Caco-2 (cell line): ENCODE measurements at regions of chr5 and their contacts with region 1.

Region 1: DNA sequence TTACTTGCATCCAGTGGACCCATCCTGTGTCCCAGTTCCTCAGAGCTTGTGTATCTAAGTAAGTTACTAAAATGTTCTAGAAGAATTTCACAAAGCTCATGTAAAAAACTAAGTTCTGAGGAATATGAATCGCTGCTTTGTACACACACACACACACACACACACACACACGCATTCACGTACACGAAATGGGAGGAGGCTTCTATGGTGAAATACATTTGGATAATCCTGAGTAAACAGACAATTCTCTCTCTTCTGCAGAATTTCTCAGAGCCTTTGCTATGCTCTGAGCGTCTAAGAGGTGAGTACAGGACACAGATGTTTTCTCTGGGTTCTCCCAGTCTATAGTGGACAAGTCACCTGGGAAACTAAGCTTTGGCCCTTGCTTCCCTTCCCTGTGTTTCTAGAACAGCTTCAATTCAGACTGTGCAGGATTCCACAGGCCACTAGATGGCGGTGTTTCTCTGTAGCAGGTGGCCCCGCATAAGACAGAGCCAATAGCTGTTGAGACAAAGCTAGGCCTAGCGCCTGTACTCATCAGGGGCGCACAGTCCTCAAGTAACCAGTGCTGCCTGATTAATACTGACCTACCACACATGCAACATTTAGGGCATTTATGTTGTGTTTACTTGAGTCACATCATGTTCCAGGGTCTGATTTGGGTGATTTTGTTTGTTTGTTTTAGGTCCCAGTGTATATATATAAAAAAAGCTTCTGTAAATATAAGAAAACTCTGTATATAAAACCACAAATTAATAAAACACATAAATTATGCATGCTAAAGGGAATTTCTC is 114.8 kb downstream of the LIFR start:
- DNase-seq: peak; percentile 89 to 90
- H3K4me3 ChIP-seq: no peak overlapping the region
- H3K4me3 Mint-ChIP-seq: no peak overlapping the region
- H3K27ac Mint-ChIP-seq: no peak overlapping the region
- H3K4me1 ChIP-seq: no peaks in the 10 kb centered on the region
- H3K4me1 Mint-ChIP-seq: no peaks in the 10 kb centered on the region
- H3K27me3 ChIP-seq: no peaks in the 10 kb centered on the region
- H3K27me3 Mint-ChIP-seq: no peaks in the 10 kb centered on the region
- CTCF ChIP-seq: peak; percentile 93 to 97

Region 2: GRCh38 chr5:38382898-38383297 is 58.8 kb before region 1 on chr5:
- CTCF ChIA-PET with region 1: interaction called, 22 read pairs
- POLR2A ChIA-PET with region 1: no interaction called
- intact Hi-C with region 1: no loop called
- DNase-seq: peak; percentile 81 to 83
- H3K4me3 ChIP-seq: no peak overlapping the region
- H3K4me3 Mint-ChIP-seq: no peak overlapping the region
- H3K27ac Mint-ChIP-seq: no peak overlapping the region
- H3K4me1 ChIP-seq: no peaks in the 10 kb centered on the region
- H3K4me1 Mint-ChIP-seq: peaks cover 8% of the 10 kb centered on the region
- H3K27me3 ChIP-seq: no peaks in the 10 kb centered on the region
- H3K27me3 Mint-ChIP-seq: peaks cover 5% of the 10 kb centered on the region
- CTCF ChIP-seq: peak; percentile 70 to 84

Region 3: DNA sequence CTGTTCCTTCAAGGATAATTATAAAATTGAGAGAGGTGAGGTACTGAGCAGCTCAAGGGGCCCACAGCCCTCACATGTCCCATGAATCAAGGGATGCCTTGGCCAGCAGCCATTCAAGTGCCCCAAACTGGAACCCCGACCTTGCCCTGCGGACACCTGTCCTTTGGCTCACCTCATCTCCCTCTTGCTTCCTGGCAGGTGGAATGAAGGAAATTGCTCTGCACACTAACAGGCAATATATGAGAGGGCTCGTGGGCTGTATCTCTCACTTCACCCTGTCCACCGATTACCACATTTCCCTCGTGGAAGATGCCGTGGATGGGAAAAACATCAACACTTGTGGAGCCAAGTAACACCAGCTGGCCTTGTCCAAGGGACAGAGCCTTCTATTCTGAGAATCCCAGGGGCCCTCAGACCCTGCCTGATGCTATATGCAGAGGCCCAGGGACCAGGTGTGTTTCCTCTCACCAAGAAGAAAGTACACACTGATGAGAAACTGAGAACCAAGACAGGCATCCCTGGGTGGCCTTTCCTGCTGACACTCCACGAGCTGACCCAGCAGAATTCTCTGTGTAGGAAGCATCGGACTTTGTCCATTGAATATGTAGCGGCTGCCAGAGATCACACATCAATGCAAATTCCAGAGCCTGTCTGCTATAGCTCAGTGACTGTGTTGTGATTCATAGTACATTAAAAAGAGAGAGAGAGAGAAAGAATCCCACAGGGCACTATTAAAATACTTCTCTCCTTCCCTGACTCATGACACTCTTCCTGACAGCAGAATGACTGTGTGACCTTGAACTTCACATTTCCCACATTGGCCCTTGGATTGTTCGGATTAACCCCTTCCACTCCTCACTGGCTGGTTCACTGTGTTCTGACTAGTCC is 22.2 kb after region 1 on chr5:
- CTCF ChIA-PET with region 1: interaction called, 11 read pairs
- POLR2A ChIA-PET with region 1: interaction called, 3 read pairs
- intact Hi-C with region 1: no loop called
- DNase-seq: peak; percentile 43 to 53
- H3K4me3 ChIP-seq: no peak overlapping the region
- H3K4me3 Mint-ChIP-seq: no peak overlapping the region
- H3K27ac Mint-ChIP-seq: no peak overlapping the region
- H3K4me1 ChIP-seq: peaks cover 8% of the 10 kb centered on the region; the same call in 1 of the 2 replicates
- H3K4me1 Mint-ChIP-seq: no peaks in the 10 kb centered on the region
- H3K27me3 ChIP-seq: no peaks in the 10 kb centered on the region
- H3K27me3 Mint-ChIP-seq: no peaks in the 10 kb centered on the region
- CTCF ChIP-seq: no peak

Region 4: GRCh38 chr5:38515646-38516045 is 74.0 kb after region 1 on chr5:
- CTCF ChIA-PET with region 1: interaction called, 33 read pairs
- POLR2A ChIA-PET with region 1: no interaction called
- intact Hi-C with region 1: no loop called
- DNase-seq: peak in 1 of 2 experiments; percentile 17
- H3K4me3 ChIP-seq: no peak overlapping the region
- H3K4me3 Mint-ChIP-seq: no peak overlapping the region
- H3K27ac Mint-ChIP-seq: no peak overlapping the region
- H3K4me1 ChIP-seq: no peaks in the 10 kb centered on the region
- H3K4me1 Mint-ChIP-seq: no peaks in the 10 kb centered on the region
- H3K27me3 ChIP-seq: no peaks in the 10 kb centered on the region
- H3K27me3 Mint-ChIP-seq: no peaks in the 10 kb centered on the region
- CTCF ChIP-seq: peak; percentile 29 to 67

Region 5: GRCh38 chr5:38666668-38667498 is 225.2 kb after region 1 on chr5:
- CTCF ChIA-PET with region 1: interaction called, 12 read pairs
- POLR2A ChIA-PET with region 1: no interaction called
- intact Hi-C with region 1: loop called (anchors 1 kb)
- DNase-seq: peak; percentile 52 to 56
- H3K4me3 ChIP-seq: no peak overlapping the region
- H3K4me3 Mint-ChIP-seq: no peak overlapping the region
- H3K27ac Mint-ChIP-seq: peak overlapping the region; percentile 13
- H3K4me1 ChIP-seq: peaks cover 58% of the 10 kb centered on the region
- H3K4me1 Mint-ChIP-seq: peaks cover 45% of the 10 kb centered on the region
- H3K27me3 ChIP-seq: no peaks in the 10 kb centered on the region
- H3K27me3 Mint-ChIP-seq: no peaks in the 10 kb centered on the region
- CTCF ChIP-seq: peak; percentile 60 to 73

Region 6: GRCh38 chr5:38751103-38751502 is 309.5 kb after region 1 on chr5:
- CTCF ChIA-PET with region 1: interaction called, 16 read pairs
- POLR2A ChIA-PET with region 1: no interaction called
- intact Hi-C with region 1: no loop called
- DNase-seq: no peak
- H3K4me3 ChIP-seq: no peak overlapping the region
- H3K4me3 Mint-ChIP-seq: no peak overlapping the region
- H3K27ac Mint-ChIP-seq: no peak overlapping the region
- H3K4me1 ChIP-seq: no peaks in the 10 kb centered on the region
- H3K4me1 Mint-ChIP-seq: peaks cover 9% of the 10 kb centered on the region
- H3K27me3 ChIP-seq: no peaks in the 10 kb centered on the region
- H3K27me3 Mint-ChIP-seq: no peaks in the 10 kb centered on the region
- CTCF ChIP-seq: no peak

Region 7: DNA sequence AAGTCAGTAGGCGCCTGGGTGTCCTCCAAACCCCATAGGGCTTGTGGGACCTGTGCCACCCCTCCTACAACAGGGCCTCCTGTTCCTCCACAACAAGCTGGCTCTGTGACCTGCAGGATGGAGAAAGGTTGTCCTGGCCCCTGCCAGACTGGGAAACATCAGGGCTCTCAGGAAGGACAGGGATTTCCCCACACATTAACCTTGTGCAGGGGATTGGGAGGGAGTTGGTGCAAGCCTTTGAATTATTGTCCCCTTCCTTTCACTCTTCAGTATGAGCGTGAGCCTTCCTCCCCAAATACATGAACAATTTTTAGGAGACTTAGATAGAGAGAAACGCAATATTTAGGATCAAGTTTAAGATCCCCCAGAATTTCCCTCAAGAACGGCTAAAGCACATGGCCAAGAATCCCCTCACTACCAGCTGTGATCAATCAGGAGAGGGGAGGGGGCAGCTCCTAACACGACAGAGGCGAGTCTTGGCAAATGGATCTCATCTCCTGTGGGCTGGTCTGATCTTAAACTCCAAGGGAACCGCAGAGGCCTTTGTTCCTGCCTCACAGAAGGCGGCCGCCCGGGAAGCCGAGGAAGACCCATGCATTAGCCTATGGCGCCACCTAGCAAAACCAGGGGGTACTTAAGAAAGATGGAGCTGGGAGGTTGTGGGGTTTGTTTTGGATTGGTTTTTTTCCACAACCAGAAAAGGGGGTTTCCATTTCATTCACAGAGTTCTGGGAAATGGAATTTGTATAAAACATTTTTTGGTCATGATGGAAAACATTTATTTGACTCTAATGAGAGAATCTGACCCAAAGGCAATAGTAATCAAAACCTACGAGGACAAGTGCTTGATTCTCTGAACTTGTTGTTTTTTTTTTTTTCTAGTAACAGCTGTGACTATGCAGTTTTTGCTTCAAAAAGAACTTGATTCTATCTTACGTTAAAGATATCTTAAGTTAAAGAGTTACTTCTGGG is 368.0 kb after region 1 on chr5:
- CTCF ChIA-PET with region 1: interaction called, 189 read pairs
- POLR2A ChIA-PET with region 1: interaction called, 3 read pairs
- intact Hi-C with region 1: loop called (anchors 1 kb)
- DNase-seq: peak; percentile 83
- H3K4me3 ChIP-seq: no peak overlapping the region
- H3K4me3 Mint-ChIP-seq: no peak overlapping the region
- H3K27ac Mint-ChIP-seq: no peak overlapping the region
- H3K4me1 ChIP-seq: peaks cover 12% of the 10 kb centered on the region
- H3K4me1 Mint-ChIP-seq: no peaks in the 10 kb centered on the region
- H3K27me3 ChIP-seq: no peaks in the 10 kb centered on the region
- H3K27me3 Mint-ChIP-seq: no peaks in the 10 kb centered on the region
- CTCF ChIP-seq: peak; percentile 88 to 93